ENCODE measurements at regions of chr15 and their contacts with region 1.

Region 1: GRCh38 chr15:96047255-96047931 is 283.1 kb upstream of the NR2F2 start:
- DNase-seq: no peak
- ATAC-seq: peak; percentile 42
- H3K4me3 ChIP-seq: no peak overlapping the region
- H3K27ac ChIP-seq: no peak overlapping the region
- H3K4me1 ChIP-seq: peaks cover 23% of the 10 kb centered on the region
- H3K27me3 ChIP-seq: no peaks in the 10 kb centered on the region
- CTCF ChIP-seq: no peak
- EP300 ChIP-seq: no peak
- POLR2A ChIP-seq: no peak
- RAD21 ChIP-seq: no peak

Region 2: DNA sequence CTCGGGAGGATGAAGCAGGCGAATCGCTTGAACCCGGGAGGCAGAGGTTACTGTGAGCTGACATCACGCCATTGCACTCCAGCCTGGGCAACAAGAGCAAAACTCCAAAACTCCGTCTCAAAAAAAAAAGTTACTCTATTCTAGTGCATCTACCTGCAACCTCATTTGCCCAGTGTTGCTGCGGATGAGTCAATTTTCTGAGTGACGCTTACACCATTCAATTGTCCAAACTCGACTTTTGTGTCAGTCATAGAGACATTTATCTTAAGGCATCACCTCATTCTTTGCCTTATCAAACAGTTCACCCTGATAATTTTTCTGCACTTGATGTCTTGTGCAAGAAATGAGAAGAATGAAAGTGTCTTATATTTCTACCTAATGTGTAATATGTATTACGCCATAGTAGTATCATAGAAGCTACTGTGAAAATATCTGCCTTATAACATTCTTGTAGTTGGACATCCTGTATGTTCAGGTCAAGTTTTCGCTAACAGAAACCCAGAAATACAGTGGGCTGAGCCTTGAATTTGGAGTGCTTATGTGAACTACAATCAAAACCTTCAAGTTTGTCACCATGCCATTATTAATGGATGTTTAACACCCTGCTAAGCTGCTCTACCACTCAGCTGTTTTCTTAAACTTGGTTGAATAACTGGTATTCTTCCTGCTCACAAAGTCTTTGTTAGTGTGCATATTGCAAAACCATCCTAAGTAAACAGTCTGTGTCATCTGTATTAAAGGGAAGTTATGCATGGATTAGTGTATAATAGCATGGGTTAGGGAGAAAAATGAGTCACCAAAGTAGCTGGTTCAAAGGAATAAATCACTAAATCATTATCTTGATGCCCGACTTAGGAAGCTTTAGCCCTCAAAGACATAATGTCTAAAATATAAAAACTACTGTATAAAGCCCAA is 247.8 kb before region 1 on chr15:
- CTCF ChIA-PET with region 1: no interaction called
- POLR2A ChIA-PET with region 1: no interaction called
- RAD21 ChIA-PET with region 1: no interaction called
- SMC1A ChIA-PET with region 1: no interaction called
- in situ Hi-C with region 1: no loop called
- intact Hi-C with region 1: no loop called
- DNase-seq: no peak
- ATAC-seq: no peak
- H3K4me3 ChIP-seq: no peak overlapping the region
- H3K27ac ChIP-seq: no peak overlapping the region
- H3K4me1 ChIP-seq: no peaks in the 10 kb centered on the region
- H3K27me3 ChIP-seq: no peaks in the 10 kb centered on the region
- CTCF ChIP-seq: no peak
- EP300 ChIP-seq: no peak
- POLR2A ChIP-seq: no peak
- RAD21 ChIP-seq: no peak

Region 3: GRCh38 chr15:95929232-95929846 is 118.1 kb before region 1 on chr15:
- CTCF ChIA-PET with region 1: no interaction called
- POLR2A ChIA-PET with region 1: interaction called, 4 read pairs
- RAD21 ChIA-PET with region 1: interaction called, 4 read pairs
- SMC1A ChIA-PET with region 1: interaction called, 4 read pairs
- in situ Hi-C with region 1: no loop called
- intact Hi-C with region 1: loop called (anchors 2 kb)
- DNase-seq: peak; percentile 48
- ATAC-seq: peak; percentile 98
- H3K4me3 ChIP-seq: no peak overlapping the region
- H3K27ac ChIP-seq: no peak overlapping the region
- H3K4me1 ChIP-seq: no peaks in the 10 kb centered on the region
- H3K27me3 ChIP-seq: no peaks in the 10 kb centered on the region
- CTCF ChIP-seq: no peak
- EP300 ChIP-seq: peak; percentile 69 to 86; a peak in 3 of 4 replicates
- POLR2A ChIP-seq: no peak
- RAD21 ChIP-seq: no peak

Region 4: DNA sequence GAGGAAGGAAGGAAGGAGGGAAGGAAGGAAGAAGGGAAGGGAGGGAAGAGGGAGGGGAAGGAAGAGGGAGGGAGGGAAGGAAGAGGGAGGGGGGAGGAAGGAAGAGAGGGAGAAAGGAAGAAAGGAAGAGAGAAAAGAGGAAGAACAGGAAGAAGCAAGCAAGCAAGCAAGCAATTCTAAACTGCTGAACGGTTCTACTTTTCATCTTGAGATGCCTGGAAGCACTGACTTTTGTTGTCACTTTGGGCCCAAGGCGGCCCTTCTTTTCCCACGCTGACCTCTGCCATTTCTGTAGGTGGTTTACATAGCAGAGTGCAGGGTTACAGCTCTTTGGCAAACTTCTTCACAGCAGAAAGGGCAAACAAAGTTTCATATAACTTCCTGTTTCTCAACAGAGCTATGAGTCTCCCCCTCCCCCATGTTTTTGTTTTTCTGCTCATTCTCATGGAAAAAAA is 59.0 kb before region 1 on chr15:
- CTCF ChIA-PET with region 1: interaction called, 3 read pairs
- POLR2A ChIA-PET with region 1: no interaction called
- RAD21 ChIA-PET with region 1: interaction called, 3 read pairs
- SMC1A ChIA-PET with region 1: interaction called, 4 read pairs
- in situ Hi-C with region 1: no loop called
- intact Hi-C with region 1: loop called (anchors 2 kb)
- DNase-seq: no peak
- ATAC-seq: peak; percentile 57
- H3K4me3 ChIP-seq: no peak overlapping the region
- H3K27ac ChIP-seq: no peak overlapping the region
- H3K4me1 ChIP-seq: peaks cover 16% of the 10 kb centered on the region
- H3K27me3 ChIP-seq: no peaks in the 10 kb centered on the region
- CTCF ChIP-seq: no peak
- EP300 ChIP-seq: no peak
- POLR2A ChIP-seq: no peak
- RAD21 ChIP-seq: no peak

Region 5: GRCh38 chr15:96011136-96011535 is 36.3 kb before region 1 on chr15:
- CTCF ChIA-PET with region 1: no interaction called
- POLR2A ChIA-PET with region 1: no interaction called
- RAD21 ChIA-PET with region 1: no interaction called
- SMC1A ChIA-PET with region 1: no interaction called
- in situ Hi-C with region 1: no loop called
- intact Hi-C with region 1: no loop called
- DNase-seq: no peak
- ATAC-seq: no peak
- H3K4me3 ChIP-seq: no peak overlapping the region
- H3K27ac ChIP-seq: no peak overlapping the region
- H3K4me1 ChIP-seq: no peaks in the 10 kb centered on the region
- H3K27me3 ChIP-seq: no peaks in the 10 kb centered on the region
- CTCF ChIP-seq: no peak
- EP300 ChIP-seq: no peak
- POLR2A ChIP-seq: no peak
- RAD21 ChIP-seq: no peak

Region 6: DNA sequence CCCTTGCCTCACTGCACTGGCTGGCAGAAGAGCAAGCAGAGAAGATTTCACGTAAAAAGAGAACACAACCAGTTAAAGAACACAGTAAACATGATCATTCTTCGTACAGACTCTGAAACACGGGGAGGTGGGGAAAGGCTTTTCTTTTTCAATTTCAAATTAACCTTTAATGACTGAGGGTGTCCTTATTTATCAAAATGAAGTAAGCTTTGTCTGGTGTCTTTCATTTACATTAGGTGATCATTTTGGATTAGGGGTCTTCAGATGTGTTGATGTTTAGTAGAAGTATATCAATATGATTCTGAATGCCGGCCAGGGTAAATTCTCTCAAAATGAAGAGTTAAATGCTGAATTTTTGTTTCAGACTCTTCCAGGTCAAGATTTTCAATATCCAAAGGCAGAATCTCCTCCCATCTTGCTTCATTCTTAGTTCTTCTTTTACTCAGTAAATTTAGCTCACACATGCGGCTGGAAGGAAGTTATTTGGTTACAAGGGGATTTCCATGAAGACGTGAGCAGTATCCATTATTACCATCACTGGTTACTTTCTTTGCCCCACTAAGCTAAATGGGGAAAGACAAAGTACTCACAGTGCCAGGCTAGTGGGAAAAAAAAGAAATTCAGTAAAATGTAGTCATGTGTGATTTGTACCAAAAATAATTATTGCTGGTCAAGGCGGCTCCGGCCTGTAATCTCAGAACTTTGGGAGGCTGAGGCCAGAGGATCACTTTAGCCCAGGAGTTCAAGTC is 10.9 kb after region 1 on chr15:
- CTCF ChIA-PET with region 1: interaction called, 10 read pairs
- POLR2A ChIA-PET with region 1: interaction called, 8 read pairs
- RAD21 ChIA-PET with region 1: interaction called, 16 read pairs
- SMC1A ChIA-PET with region 1: interaction called, 46 read pairs
- in situ Hi-C with region 1: no loop called
- intact Hi-C with region 1: no loop called
- DNase-seq: peak; percentile 89
- ATAC-seq: peak; percentile 93
- H3K4me3 ChIP-seq: no peak overlapping the region
- H3K27ac ChIP-seq: peak overlapping the region; percentile 88
- H3K4me1 ChIP-seq: peaks cover 26% of the 10 kb centered on the region
- H3K27me3 ChIP-seq: no peaks in the 10 kb centered on the region
- CTCF ChIP-seq: no peak
- EP300 ChIP-seq: peak; percentile 85 to 87; a peak in 2 of 4 replicates
- POLR2A ChIP-seq: no peak
- RAD21 ChIP-seq: 0 out of 2 replicates have a peak, but pooled peaks have one; percentile 3

Region 7: DNA sequence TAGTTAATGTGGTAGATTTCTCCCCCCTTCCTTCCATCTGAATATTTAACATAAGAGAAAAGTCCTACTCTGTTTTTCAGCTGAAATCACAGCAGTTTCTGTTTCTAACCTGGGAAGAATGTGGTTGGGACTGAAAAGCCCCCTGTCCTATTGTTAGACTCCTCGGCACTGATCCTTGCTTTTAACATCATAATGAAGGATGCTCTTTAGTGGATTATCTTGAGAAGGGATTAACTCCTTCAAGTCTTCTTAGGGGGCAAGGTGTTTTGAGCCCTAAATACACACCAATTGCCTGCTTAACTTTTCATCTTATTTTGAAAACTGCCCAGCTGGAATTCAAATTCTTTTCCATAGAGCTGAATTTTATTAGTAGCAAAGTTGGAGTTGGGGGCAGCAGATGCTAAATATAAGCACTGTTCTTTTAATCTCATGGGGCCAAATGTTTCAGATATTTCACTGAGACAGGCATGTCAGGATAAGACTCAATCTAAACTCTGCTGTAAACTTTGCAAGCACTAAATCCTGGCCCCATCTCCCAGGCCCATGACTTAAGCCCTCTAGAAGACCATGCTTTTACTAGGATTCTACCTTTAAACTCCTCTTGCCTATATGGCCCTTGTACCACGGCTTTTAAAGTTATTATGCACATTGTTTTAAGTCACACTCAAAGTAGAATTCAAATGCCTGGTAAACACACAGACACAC is 39.9 kb after region 1 on chr15:
- CTCF ChIA-PET with region 1: no interaction called
- POLR2A ChIA-PET with region 1: no interaction called
- RAD21 ChIA-PET with region 1: no interaction called
- SMC1A ChIA-PET with region 1: no interaction called
- in situ Hi-C with region 1: no loop called
- intact Hi-C with region 1: no loop called
- DNase-seq: no peak
- ATAC-seq: peak; percentile 76
- H3K4me3 ChIP-seq: 0 out of 2 replicates have a peak overlapping the region, but pooled peaks have one; percentile 19
- H3K27ac ChIP-seq: peak overlapping the region; percentile 74
- H3K4me1 ChIP-seq: peaks cover 13% of the 10 kb centered on the region
- H3K27me3 ChIP-seq: no peaks in the 10 kb centered on the region
- CTCF ChIP-seq: no peak
- EP300 ChIP-seq: no peak
- POLR2A ChIP-seq: no peak
- RAD21 ChIP-seq: no peak

Region 8: DNA sequence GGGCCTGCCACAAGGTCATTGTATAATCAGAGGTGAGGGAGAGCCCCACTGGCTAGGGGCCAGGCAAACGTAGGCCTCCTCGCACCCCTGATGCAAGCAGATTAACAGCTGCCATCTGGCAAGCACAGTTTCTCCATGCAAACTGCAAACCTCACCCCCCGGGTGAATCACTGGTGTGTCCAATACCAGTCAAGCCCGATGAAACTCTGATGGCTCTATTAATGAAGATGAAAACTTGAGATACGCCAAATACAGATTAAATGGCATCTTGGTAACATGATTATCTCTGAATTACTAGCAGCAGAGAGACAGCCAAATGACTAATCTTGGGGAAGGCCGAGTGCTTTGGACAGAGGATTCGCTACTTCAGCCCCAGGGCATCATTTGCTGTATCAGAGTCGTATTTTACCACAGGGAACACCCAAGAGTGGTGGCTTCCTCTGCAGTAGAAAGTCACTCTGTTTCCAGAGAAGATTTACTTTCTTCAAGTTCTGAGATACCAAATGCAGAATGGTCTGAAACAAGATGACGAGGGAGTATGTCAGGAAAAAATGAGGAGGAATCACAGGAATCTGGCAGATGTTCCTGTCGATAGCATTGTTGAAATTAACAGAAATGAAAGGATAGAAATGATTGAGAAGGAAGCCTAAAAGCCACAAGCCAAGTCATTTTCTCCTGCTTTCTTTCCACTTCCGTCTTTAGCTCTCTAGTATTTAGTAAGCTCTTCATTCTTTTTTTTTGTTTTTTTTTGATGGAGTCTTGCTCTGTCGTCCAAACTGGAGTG is 186.9 kb after region 1 on chr15:
- CTCF ChIA-PET with region 1: no interaction called
- POLR2A ChIA-PET with region 1: no interaction called
- RAD21 ChIA-PET with region 1: no interaction called
- SMC1A ChIA-PET with region 1: interaction called, 3 read pairs
- in situ Hi-C with region 1: no loop called
- intact Hi-C with region 1: loop called (anchors 5 kb)
- DNase-seq: peak; percentile 58
- ATAC-seq: peak; percentile 92
- H3K4me3 ChIP-seq: no peak overlapping the region
- H3K27ac ChIP-seq: peak overlapping the region; percentile 57
- H3K4me1 ChIP-seq: peaks cover 10% of the 10 kb centered on the region
- H3K27me3 ChIP-seq: no peaks in the 10 kb centered on the region
- CTCF ChIP-seq: no peak
- EP300 ChIP-seq: peak; percentile 64 to 95; a peak in 3 of 4 replicates
- POLR2A ChIP-seq: no peak
- RAD21 ChIP-seq: no peak

Region 9: GRCh38 chr15:96321639-96322535 is 274.5 kb after region 1 on chr15:
- CTCF ChIA-PET with region 1: interaction called, 13 read pairs
- POLR2A ChIA-PET with region 1: no interaction called
- RAD21 ChIA-PET with region 1: interaction called, 7 read pairs
- SMC1A ChIA-PET with region 1: interaction called, 8 read pairs
- in situ Hi-C with region 1: no loop called
- intact Hi-C with region 1: loop called (anchors 2 kb)
- DNase-seq: no peak
- ATAC-seq: peak; percentile 31
- H3K4me3 ChIP-seq: peak overlapping the region; percentile 47
- H3K27ac ChIP-seq: no peak overlapping the region
- H3K4me1 ChIP-seq: peaks cover 3% of the 10 kb centered on the region; the same call in 1 of the 2 replicates
- H3K27me3 ChIP-seq: peaks cover 0 to 18% of the 10 kb centered on the region in 2 experiments; a peak in 2 of 4 replicates
- CTCF ChIP-seq: peak in 1 of 3 experiments; percentile 17; a peak in 1 of 6 replicates
- EP300 ChIP-seq: no peak
- POLR2A ChIP-seq: no peak
- RAD21 ChIP-seq: no peak

Measured in GM12878 (cell line).